ENCODE measurements at regions of chr17 and their contacts with region 1.

Region 1: DNA sequence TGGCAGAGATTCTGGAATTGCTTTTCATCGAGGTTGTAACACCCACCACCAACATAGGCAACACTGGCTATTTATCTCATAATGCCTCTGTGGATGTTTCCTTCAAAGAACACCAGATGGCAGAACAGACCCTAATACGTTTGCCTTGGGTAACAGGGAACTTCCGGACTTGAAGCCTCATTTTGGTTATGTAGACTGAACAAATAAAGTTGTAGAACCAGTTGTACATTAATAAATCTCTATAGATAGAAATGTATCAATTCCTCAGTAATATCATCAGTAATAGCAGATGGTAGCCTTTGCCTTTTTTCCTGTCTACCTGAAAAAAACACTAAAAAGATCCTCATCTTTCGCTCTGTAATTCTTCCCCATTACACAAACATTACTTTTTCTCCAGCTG is 25.9 kb upstream of the APOH start:
- DNase-seq: peak in 3 of 4 donors; percentile 28 to 61 (median 29)
- ATAC-seq: peak; percentile 79
- H3K4me3 ChIP-seq: no peak overlapping the region
- H3K27ac ChIP-seq: no peak overlapping the region
- H3K4me1 ChIP-seq: no peaks in the 10 kb centered on the region
- H3K27me3 ChIP-seq: no peaks in the 10 kb centered on the region
- CTCF ChIP-seq: peak; percentile 25 to 84 (median 72)
- POLR2A ChIP-seq: no peak

Region 2: DNA sequence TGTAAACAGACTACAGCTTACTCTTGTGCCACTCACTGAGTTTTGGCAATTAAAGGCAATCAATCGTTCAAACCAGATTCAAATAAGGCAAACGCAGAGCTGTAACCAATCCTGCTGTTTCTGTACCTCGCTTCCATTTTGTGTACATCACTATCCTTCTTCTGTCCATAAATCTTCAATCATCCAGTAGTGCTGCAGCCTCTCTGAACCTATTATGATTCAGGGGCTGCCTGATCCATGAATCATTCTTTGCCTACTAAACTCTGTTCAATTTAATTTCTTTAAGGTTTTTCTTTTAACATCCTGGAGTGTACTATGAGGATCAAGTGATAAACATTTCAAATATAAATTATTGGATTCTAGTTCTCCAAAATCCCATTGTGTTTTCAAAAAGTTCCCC is 157.1 kb before region 1 on chr17:
- intact Hi-C with region 1: no loop called
- DNase-seq: no peak
- ATAC-seq: no peak
- H3K4me3 ChIP-seq: no peak overlapping the region
- H3K27ac ChIP-seq: no peak overlapping the region
- H3K4me1 ChIP-seq: no peaks in the 10 kb centered on the region
- H3K27me3 ChIP-seq: no peaks in the 10 kb centered on the region
- CTCF ChIP-seq: no peak
- POLR2A ChIP-seq: no peak

Region 3: DNA sequence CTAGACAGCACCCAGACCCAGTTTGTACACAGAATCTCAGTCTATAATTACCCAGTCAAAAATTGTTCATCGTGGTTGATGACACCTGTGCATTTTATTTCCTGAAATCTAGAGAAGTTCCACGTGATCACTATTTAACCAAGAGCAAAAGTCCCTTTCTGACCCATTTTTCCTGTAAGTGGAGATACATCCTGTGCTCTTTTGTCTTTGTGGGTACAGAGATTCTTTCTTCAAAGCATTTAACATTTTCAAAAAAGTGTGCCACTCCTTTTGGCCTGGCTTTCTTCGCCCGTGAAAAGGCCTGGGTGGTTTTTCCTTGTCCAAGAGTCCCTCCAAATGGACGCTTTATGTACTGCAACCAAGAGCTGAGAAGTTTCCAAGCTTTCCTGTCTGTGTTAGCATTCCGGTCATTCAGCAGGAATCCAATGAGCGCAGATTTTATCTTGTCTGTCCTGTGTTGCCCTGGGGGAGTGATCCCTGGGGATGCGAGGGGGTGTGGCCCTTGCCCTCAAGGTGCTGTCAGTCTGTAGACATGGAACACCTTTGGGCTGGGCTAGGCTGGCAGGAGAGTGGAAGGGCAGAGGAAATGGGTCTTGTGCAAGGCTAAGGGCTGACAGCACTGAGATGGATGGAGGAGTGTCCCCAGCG is 418.7 kb after region 1 on chr17:
- intact Hi-C with region 1: loop called (anchors 10 kb)
- DNase-seq: peak; percentile 39 to 58 (median 51)
- ATAC-seq: peak; percentile 70
- H3K4me3 ChIP-seq: no peak overlapping the region
- H3K27ac ChIP-seq: no peak overlapping the region
- H3K4me1 ChIP-seq: no peaks in the 10 kb centered on the region
- H3K27me3 ChIP-seq: no peaks in the 10 kb centered on the region
- CTCF ChIP-seq: peak; percentile 32 to 84 (median 68)
- POLR2A ChIP-seq: no peak